ENCODE measurements at regions of chr1 and their contacts with region 1.

Region 1: GRCh38 chr1:92310185-92310597 is 11.3 kb downstream of the RPAP2 start:
- DNase-seq: no peak
- ATAC-seq: peak in 1 of 4 donors; percentile 69
- H3K4me3 ChIP-seq: no peak overlapping the region
- H3K27ac ChIP-seq: no peak overlapping the region
- H3K4me1 ChIP-seq: no peaks in the 10 kb centered on the region
- H3K27me3 ChIP-seq: no peaks in the 10 kb centered on the region
- CTCF ChIP-seq: peak; percentile 45

Region 2: GRCh38 chr1:92123868-92124267 is 186.3 kb before region 1 on chr1:
- intact Hi-C with region 1: no loop called
- DNase-seq: no peak
- ATAC-seq: no peak
- H3K4me3 ChIP-seq: no peak overlapping the region
- H3K27ac ChIP-seq: no peak overlapping the region
- H3K4me1 ChIP-seq: no peaks in the 10 kb centered on the region
- H3K27me3 ChIP-seq: no peaks in the 10 kb centered on the region
- CTCF ChIP-seq: no peak

Region 3: GRCh38 chr1:92230736-92231135 is 79.5 kb before region 1 on chr1:
- intact Hi-C with region 1: no loop called
- DNase-seq: no peak
- ATAC-seq: no peak
- H3K4me3 ChIP-seq: no peak overlapping the region
- H3K27ac ChIP-seq: no peak overlapping the region
- H3K4me1 ChIP-seq: no peaks in the 10 kb centered on the region
- H3K27me3 ChIP-seq: no peaks in the 10 kb centered on the region
- CTCF ChIP-seq: no peak

Region 4: GRCh38 chr1:92623187-92623778 is 313.1 kb after region 1 on chr1:
- intact Hi-C with region 1: loop called (anchors 5 to 10 kb)
- DNase-seq: no peak
- ATAC-seq: no peak
- H3K4me3 ChIP-seq: no peak overlapping the region
- H3K27ac ChIP-seq: no peak overlapping the region
- H3K4me1 ChIP-seq: no peaks in the 10 kb centered on the region
- H3K27me3 ChIP-seq: no peaks in the 10 kb centered on the region
- CTCF ChIP-seq: peak; percentile 37